ENCODE measurements at regions of chr5 and their contacts with region 1.

Region 1: GRCh38 chr5:172770675-172771438 is at the start of gene DUSP1:
- DNase-seq: peak; percentile 93 to 100 (median 98)
- ATAC-seq: peak; percentile 54 to 75 (median 72)
- H3K4me3 ChIP-seq: peak within 1 kb of the TSS; percentile 90 to 95
- H3K4me3 Mint-ChIP-seq: peak within 1 kb of the TSS; percentile 90 to 93 (median 91)
- H3K27ac ChIP-seq: peak within 1 kb of the TSS; percentile 98
- H3K27ac Mint-ChIP-seq: peak within 1 kb of the TSS; percentile 99
- H3K4me1 ChIP-seq: peaks cover 4 to 67% of the 10 kb centered on the region in 2 experiments
- H3K4me1 Mint-ChIP-seq: peaks cover 63 to 75% (median 73%) of the 10 kb centered on the region in 3 donors
- H3K27me3 ChIP-seq: no peaks in the 10 kb centered on the region
- H3K27me3 Mint-ChIP-seq: no peaks in the 10 kb centered on the region
- total RNA-seq, gene DUSP1: 22.6 to 1,564 (median 28.9) TPM

Region 2: DNA sequence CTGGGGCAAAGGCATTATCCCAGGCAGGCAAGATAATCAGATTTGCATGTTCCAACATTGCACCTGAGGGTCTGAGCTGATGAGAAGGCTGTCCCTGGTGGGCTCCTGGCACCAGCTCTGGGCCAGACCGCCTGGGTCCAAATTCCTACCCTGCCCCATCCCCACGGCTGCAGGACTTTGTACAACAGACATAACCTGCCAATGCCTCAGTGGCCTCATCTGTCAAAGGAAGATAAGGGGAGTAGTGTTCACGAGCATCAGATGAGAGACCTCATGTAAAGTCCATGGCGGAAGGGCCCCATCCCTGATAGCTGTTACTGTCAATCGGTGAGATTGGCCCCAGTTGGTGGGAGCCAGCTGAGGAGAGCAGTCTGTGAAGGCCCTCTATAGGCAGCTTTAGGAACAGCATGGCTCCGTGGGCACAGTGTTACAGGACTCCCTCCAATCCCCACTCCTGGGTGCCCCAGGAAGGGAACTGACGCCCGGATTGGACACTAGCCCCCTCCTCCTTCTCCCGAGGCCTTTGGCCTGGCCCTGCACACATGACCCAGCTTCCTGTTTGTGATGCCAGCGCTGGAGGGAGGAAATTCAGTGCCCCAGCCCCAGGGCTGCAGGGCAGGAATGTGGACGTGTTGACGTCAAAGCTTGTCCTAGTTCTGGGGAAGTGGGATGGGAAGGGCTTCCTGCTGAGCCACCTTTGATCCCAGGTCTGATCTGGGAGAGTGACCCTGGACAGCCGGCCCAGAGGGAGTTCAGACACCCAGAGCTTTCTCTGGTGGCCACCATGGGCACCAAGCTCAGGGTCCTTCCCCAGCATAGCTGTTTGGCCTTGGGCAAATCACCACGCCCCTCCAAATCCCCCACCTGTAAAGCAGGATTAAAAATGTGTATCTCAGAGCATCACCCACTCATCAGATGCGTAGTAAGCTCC is 56.1 kb before region 1 on chr5:
- CTCF ChIA-PET with region 1: interaction called, 6 to 14 read pairs
- POLR2A ChIA-PET with region 1: interaction called in 1 of 2 experiments, 10 read pairs
- DNase-seq: peak; percentile 28 to 81 (median 59)
- ATAC-seq: peak; percentile 65 to 81 (median 72)
- H3K4me3 ChIP-seq: no peak overlapping the region
- H3K4me3 Mint-ChIP-seq: no peak overlapping the region
- H3K27ac ChIP-seq: no peak overlapping the region
- H3K27ac Mint-ChIP-seq: no peak overlapping the region
- H3K4me1 ChIP-seq: peaks cover 0 to 27% of the 10 kb centered on the region in 2 experiments
- H3K4me1 Mint-ChIP-seq: peaks cover 8 to 10% (median 9%) of the 10 kb centered on the region in 3 donors
- H3K27me3 ChIP-seq: peaks cover 0 to 44% of the 10 kb centered on the region in 2 experiments
- H3K27me3 Mint-ChIP-seq: peaks cover 10% of the 10 kb centered on the region in 2 donors

Region 3: DNA sequence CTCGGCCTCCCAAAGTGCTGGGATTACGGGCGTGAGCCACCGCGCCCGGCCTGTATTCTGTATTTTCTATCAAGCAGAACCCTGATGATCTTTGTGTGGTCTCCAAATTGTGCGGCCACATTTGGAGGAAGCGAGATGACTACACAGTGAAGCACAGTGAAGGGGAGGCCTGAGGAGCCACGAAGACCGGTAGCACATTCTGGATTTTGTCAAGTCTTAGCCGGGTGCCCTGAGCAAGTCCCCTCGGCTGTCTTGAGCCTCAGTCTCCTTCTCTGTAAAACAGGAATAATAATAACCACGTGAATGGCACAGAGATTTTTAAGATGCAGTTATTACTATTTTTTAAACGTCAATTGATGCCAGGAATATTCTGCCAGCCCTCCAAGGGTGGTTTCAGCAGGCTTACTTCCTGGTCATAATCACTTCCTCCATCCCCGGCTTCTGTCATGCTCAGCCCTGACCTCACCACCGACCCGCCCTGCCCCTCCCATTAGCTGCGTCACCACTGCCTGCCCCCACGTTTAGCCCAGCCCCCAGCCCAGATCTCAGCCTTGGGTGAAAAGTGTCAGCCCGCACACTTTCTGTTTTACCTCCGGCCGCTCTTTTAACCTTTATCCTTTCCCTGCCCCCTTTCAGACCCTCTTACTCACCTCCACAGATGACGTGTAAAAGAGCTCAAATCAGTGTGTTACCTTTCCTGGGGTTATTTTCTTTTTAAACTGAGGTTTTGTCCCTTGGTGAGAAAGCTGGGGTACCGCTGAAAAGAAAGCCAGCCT is 36.2 kb after region 1 on chr5:
- CTCF ChIA-PET with region 1: interaction called, 3 to 13 read pairs
- POLR2A ChIA-PET with region 1: interaction called in 1 of 2 experiments, 39 read pairs
- DNase-seq: peak; percentile 57 to 88 (median 79)
- ATAC-seq: peak; percentile 93 to 99 (median 98)
- H3K4me3 ChIP-seq: peak overlapping the region; percentile 32 to 38
- H3K4me3 Mint-ChIP-seq: peak overlapping the region; percentile 71 to 85 (median 78)
- H3K27ac ChIP-seq: peak overlapping the region; percentile 59
- H3K27ac Mint-ChIP-seq: peak overlapping the region; percentile 80 to 93
- H3K4me1 ChIP-seq: peaks cover 0 to 14% of the 10 kb centered on the region in 2 experiments
- H3K4me1 Mint-ChIP-seq: peaks cover 12 to 19% (median 15%) of the 10 kb centered on the region in 3 donors
- H3K27me3 ChIP-seq: peaks cover 0 to 3% of the 10 kb centered on the region in 2 experiments
- H3K27me3 Mint-ChIP-seq: no peaks in the 10 kb centered on the region

Region 4: DNA sequence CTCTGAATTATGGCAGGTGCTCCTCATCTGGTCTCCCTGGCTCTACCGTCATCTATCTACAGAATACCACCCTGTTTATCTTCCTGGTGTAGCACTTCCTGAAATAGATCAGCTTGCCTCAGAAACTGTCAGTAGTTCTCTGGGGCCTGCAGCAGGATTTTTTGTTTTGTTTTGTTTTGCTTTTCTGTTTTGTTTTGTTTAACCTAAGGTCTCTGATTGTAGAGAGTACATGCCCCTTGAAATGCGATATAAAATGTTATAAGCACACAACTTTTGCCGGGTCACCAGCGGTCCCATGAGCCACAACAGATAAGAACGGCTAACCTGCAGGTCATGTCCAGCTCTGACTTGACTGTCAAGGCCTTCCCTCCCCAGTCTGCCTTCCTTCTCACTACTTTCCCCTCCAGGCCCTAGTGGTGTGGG is 258.7 kb after region 1 on chr5:
- CTCF ChIA-PET with region 1: no interaction called
- POLR2A ChIA-PET with region 1: no interaction called
- DNase-seq: peak in 1 of 35 experiments; percentile 21
- ATAC-seq: peak; percentile 57 to 75 (median 68)
- H3K4me3 ChIP-seq: no peak overlapping the region
- H3K4me3 Mint-ChIP-seq: no peak overlapping the region
- H3K27ac ChIP-seq: peak overlapping the region; percentile 25
- H3K27ac Mint-ChIP-seq: no peak overlapping the region
- H3K4me1 ChIP-seq: peaks cover 12 to 23% of the 10 kb centered on the region in 2 experiments
- H3K4me1 Mint-ChIP-seq: peaks cover 13 to 27% (median 19%) of the 10 kb centered on the region in 3 donors
- H3K27me3 ChIP-seq: no peaks in the 10 kb centered on the region
- H3K27me3 Mint-ChIP-seq: no peaks in the 10 kb centered on the region